Psoas muscle (tissue), 8 donors: ENCODE measurements at regions of chr7 and their contacts with region 1.

Region 1: DNA sequence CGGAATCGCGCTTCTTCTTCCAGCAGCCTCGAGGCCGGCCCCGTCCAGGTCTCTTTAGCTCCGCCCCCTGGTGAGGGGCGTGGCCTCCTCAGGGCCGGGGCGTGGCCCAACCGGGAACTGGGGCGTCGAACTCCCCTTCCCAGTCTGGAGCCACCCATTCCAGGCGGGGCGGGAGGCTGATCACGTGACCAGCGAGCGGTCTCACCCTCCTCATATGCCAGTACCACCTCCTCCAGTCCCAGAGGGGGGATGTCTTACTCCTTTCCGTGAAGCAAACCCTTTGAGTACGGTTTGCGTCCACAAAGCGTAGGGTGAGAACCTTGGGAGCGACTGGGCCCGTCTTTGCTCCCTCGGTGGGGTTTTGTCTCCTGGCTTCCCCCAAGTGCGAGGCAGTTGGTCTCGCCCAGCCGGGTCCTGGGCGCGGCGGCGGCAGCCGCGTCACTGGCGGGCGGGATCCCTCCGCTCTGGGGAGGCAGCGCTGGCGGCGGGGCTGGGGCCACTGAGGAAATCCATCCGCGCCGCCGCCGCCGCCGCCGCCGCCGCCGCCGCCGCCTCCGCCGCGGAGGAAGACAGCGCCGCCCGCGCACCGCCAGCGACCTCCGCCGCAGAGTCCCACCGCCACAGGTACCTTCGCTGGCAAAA is at the start of gene GNB2:
- DNase-seq: peak; percentile 99 to 100
- ATAC-seq: peak; percentile 89 to 94 (median 92)
- H3K4me3 ChIP-seq: peak within 1 kb of the TSS; percentile 92
- H3K27ac ChIP-seq: peak within 1 kb of the TSS; percentile 97
- H3K4me1 ChIP-seq: no peaks in the 10 kb centered on the region
- H3K27me3 ChIP-seq: no peaks in the 10 kb centered on the region
- CTCF ChIP-seq: no peak
- total RNA-seq, gene GNB2: 87.1 to 130 (median 121) TPM

Region 2: GRCh38 chr7:100611974-100612729 is 61.3 kb before region 1 on chr7 and contains the start of gene MOSPD3:
- intact Hi-C with region 1: loop called (anchors 5 kb)
- DNase-seq: peak; percentile 98 to 99
- ATAC-seq: peak; percentile 96 to 99 (median 97)
- H3K4me3 ChIP-seq: peak within 1 kb of the TSS; percentile 88
- H3K27ac ChIP-seq: peak within 1 kb of the TSS; percentile 99
- H3K4me1 ChIP-seq: no peaks in the 10 kb centered on the region
- H3K27me3 ChIP-seq: no peaks in the 10 kb centered on the region
- CTCF ChIP-seq: no peak
- total RNA-seq, gene MOSPD3: 6.2 to 7.0 (median 6.4) TPM

Region 3: DNA sequence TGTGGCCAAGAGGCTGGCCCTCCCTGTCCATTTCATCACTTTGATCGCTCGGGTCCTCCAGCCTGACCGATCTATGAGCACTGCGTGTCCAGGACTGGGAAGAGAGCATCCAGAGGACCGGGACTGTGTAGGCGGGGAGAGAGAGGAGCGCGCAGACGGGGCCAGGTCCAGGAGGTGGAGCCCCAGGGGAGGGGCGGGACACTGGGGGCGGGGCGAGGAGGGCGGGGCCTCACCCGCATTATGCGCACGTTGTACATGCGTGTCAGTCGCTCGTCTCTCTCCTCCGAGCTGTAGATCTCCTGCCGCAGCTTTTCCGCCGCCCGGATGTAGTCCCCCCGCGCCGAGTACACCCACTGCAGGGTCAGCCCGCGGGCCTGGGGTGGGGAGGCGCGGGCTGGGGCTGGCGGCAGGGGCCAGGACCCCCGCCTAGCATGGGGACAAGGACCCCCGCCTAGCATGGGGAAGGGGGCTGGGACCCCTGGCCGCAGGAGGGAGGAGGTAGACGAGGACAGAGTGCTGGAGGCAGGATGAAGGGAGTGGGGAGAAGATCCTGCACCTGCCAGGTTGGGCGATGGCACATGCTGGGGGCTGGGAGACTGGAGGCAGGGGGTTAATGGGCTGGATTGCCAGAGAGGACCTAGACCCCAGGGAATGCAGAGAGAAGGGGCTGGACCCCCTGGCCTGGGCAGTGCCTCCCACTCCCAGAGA is 46.7 kb before region 1 on chr7:
- intact Hi-C with region 1: loop called in 1 of 2 experiments (anchors 5 kb)
- DNase-seq: peak; percentile 82 to 84
- ATAC-seq: peak; percentile 91 to 97 (median 94)
- H3K4me3 ChIP-seq: peak overlapping the region; percentile 49
- H3K27ac ChIP-seq: no peak overlapping the region
- H3K4me1 ChIP-seq: peaks cover 8% of the 10 kb centered on the region
- H3K27me3 ChIP-seq: peaks cover 0 to 9% (median 2%) of the 10 kb centered on the region in 3 donors
- CTCF ChIP-seq: no peak